ENCODE measurements at regions of chr11 and their contacts with region 1.

Region 1: DNA sequence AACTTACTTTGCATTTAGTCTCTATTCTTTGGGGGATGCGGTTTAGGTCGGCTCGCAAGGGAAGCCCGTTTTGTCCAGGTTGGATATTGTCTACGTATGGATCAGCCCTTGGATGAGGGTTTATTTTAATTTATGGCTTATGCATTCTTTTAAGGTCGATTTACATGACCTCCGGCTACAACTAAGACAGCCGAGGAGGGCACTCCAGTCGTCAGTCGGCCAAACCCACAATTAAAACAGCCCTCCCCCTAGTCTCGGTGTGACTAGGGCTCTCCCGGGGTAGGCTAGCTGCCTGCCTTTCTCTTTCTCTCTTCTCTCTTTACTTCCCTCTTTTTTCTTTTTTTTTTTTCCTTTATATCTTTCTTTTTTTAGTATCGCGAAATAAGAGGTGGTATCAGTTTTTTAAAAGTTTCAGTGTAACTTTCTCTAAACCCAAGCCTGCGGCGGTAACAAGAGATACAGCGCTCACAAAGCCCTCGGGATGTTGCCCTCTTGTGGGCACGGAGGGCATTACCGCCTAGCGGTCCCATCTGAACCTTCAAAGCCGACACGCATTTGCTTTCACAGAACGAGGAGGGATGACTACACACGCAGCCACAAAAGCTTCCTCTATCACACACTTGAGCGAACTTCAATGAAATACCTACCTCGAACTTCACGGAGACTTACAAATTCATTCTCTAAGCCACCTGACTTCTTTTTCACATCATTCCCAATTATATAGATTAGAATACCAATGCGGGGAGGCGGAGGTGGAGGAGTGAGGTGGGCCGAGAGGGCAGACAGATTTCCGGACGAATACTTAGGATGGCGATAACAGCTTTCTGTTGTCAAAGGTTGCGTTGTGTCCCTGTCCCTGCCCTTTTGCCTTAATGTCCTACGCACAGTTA is 132.3 kb upstream of the C11orf58 start:
- DNase-seq: peak; percentile 62 to 86
- ATAC-seq: peak; percentile 89 to 93 (median 90)
- H3K4me3 ChIP-seq: peak overlapping the region; percentile 1
- H3K4me3 Mint-ChIP-seq: peak overlapping the region; percentile 98
- H3K27ac ChIP-seq: no peak overlapping the region
- H3K27ac Mint-ChIP-seq: peak overlapping the region; percentile 26 to 67
- H3K4me1 ChIP-seq: peaks cover 40% of the 10 kb centered on the region
- H3K4me1 Mint-ChIP-seq: peaks cover 10 to 18% of the 10 kb centered on the region in 2 donors
- H3K27me3 ChIP-seq: peaks cover 74% of the 10 kb centered on the region
- H3K27me3 Mint-ChIP-seq: peaks cover 36 to 43% of the 10 kb centered on the region in 2 donors
- CTCF ChIP-seq: peak; percentile 81

Region 2: DNA sequence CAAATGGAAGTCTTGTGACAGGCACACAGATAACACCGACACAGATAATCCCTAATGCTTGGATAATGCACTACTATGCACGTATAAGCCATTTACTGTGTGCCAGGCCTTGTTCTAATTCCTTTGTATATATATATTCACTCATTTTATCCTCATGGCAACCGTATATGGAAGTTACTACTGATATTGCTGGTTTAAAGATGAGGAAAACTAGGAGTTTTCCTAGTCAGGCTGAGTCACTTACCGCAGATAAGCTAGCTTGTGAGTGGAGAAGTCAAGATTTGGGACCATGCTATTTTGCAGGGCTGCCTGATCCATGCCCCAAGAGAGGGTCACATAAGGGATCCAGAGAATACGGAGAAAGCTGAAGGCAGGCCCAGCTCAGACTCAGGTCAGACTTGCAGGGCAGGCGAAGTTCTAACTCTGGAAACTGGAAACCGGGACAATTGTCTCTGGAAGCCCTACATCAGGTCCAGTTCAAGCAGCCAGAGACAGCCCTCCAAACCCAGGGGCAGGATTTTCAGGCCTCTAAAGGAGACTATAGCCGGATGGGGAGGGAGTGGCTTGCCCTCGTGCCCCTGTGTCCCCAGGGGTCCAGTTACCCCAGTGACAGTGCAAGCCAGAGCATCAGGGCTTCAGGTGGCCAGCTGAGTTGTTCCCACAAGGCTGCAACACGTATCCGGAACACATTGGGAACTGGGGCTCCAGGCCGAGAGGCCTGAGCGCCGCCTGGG is 956.6 kb before region 1 on chr11:
- intact Hi-C with region 1: loop called (anchors 5 kb)
- DNase-seq: no peak
- ATAC-seq: peak in 1 of 3 donors; percentile 5
- H3K4me3 ChIP-seq: no peak overlapping the region
- H3K4me3 Mint-ChIP-seq: no peak overlapping the region
- H3K27ac ChIP-seq: no peak overlapping the region
- H3K27ac Mint-ChIP-seq: no peak overlapping the region
- H3K4me1 ChIP-seq: peaks cover 8% of the 10 kb centered on the region
- H3K4me1 Mint-ChIP-seq: peaks cover 0 to 6% of the 10 kb centered on the region in 2 donors
- H3K27me3 ChIP-seq: peaks cover 4% of the 10 kb centered on the region
- H3K27me3 Mint-ChIP-seq: peaks cover 14 to 18% of the 10 kb centered on the region in 2 donors
- CTCF ChIP-seq: no peak

Region 3: DNA sequence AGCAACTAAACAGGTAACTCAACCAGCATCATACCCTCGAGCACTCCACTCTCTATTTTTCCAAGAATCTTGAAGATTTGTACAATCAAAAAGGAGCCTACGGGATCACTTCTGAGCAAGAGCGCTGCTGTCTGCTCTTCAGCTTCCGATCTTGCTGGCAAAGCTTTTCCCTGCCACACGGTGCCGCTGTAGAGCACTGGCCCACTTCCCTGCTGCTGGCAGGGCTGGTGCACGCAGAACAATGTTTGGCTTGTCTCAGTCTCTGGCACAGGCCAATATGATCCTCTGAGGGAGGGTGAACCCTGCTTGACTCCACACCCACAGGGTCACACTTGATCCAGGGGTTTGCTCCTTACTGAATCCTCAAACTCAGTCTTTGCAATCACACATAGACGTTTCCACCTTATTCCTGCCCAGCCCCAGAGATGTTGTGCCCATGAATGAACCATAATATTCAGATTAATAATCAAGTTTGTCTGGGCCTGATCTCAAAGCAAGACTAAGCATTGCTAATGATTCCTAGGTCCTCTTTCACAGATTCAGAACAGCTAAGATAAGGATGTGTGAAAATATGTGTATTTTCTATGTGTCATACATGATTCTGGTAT is 786.4 kb before region 1 on chr11:
- intact Hi-C with region 1: loop called (anchors 5 kb)
- DNase-seq: peak in 1 of 2 donors; percentile 22
- ATAC-seq: peak; percentile 42 to 63 (median 62)
- H3K4me3 ChIP-seq: no peak overlapping the region
- H3K4me3 Mint-ChIP-seq: no peak overlapping the region
- H3K27ac ChIP-seq: no peak overlapping the region
- H3K27ac Mint-ChIP-seq: no peak overlapping the region
- H3K4me1 ChIP-seq: no peaks in the 10 kb centered on the region
- H3K4me1 Mint-ChIP-seq: no peaks in the 10 kb centered on the region
- H3K27me3 ChIP-seq: no peaks in the 10 kb centered on the region
- H3K27me3 Mint-ChIP-seq: no peaks in the 10 kb centered on the region
- CTCF ChIP-seq: no peak

Region 4: GRCh38 chr11:16487724-16488123 is 118.4 kb before region 1 on chr11:
- intact Hi-C with region 1: no loop called
- DNase-seq: no peak
- ATAC-seq: no peak
- H3K4me3 ChIP-seq: no peak overlapping the region
- H3K4me3 Mint-ChIP-seq: no peak overlapping the region
- H3K27ac ChIP-seq: no peak overlapping the region
- H3K27ac Mint-ChIP-seq: no peak overlapping the region
- H3K4me1 ChIP-seq: no peaks in the 10 kb centered on the region
- H3K4me1 Mint-ChIP-seq: no peaks in the 10 kb centered on the region
- H3K27me3 ChIP-seq: no peaks in the 10 kb centered on the region
- H3K27me3 Mint-ChIP-seq: no peaks in the 10 kb centered on the region
- CTCF ChIP-seq: no peak